Activated B cell treated with CpG ODN at 0.5 μM for 24 hours (primary cell): ENCODE measurements at regions of chr9 and their contacts with region 1.

Region 1: DNA sequence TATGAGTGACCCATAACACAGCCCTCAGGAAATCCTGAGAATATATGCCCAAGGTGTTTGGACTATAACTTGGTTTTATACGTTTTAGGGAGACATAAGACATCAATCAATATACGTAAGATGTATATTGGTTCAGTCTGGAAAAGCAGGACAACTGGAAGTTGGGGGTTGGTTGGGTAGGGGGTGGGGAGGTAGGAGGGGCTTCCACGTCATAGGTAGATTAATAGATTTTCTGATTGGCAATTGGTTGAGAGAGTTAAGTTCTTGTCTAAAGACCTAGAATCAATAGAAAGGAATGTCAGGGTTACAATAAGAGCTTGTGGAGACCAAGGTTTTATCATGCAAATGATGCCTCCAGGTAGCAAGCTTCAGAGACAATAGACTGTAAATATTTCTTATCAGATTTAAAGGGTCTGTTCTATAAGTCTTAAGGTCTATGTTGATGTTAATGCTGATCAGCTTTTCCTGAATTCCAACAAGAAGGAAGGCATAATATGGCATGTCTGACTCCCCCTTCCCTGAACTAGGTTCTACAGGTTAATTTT is 2267.7 kb upstream of the ACO1 start:
- DNase-seq: no peak
- ATAC-seq: no peak
- H3K4me3 Mint-ChIP-seq: no peak overlapping the region
- H3K27ac Mint-ChIP-seq: no peak overlapping the region
- H3K4me1 Mint-ChIP-seq: no peaks in the 10 kb centered on the region
- H3K27me3 Mint-ChIP-seq: no peaks in the 10 kb centered on the region
- CTCF ChIP-seq: no peak

Region 2: GRCh38 chr9:30015073-30015472 is 101.7 kb before region 1 on chr9:
- CTCF ChIA-PET with region 1: no interaction called
- POLR2A ChIA-PET with region 1: no interaction called
- intact Hi-C with region 1: no loop called
- DNase-seq: no peak
- ATAC-seq: no peak
- H3K4me3 Mint-ChIP-seq: no peak overlapping the region
- H3K27ac Mint-ChIP-seq: no peak overlapping the region
- H3K4me1 Mint-ChIP-seq: no peaks in the 10 kb centered on the region
- H3K27me3 Mint-ChIP-seq: no peaks in the 10 kb centered on the region
- CTCF ChIP-seq: no peak

Region 3: GRCh38 chr9:30172206-30172605 is 55.5 kb after region 1 on chr9:
- CTCF ChIA-PET with region 1: no interaction called
- POLR2A ChIA-PET with region 1: no interaction called
- intact Hi-C with region 1: loop called (anchors 10 kb)
- DNase-seq: no peak
- ATAC-seq: no peak
- H3K4me3 Mint-ChIP-seq: no peak overlapping the region
- H3K27ac Mint-ChIP-seq: no peak overlapping the region
- H3K4me1 Mint-ChIP-seq: no peaks in the 10 kb centered on the region
- H3K27me3 Mint-ChIP-seq: no peaks in the 10 kb centered on the region
- CTCF ChIP-seq: no peak

Region 4: GRCh38 chr9:30299126-30299780 is 182.5 kb after region 1 on chr9:
- CTCF ChIA-PET with region 1: no interaction called
- POLR2A ChIA-PET with region 1: no interaction called
- intact Hi-C with region 1: no loop called
- DNase-seq: no peak
- ATAC-seq: no peak
- H3K4me3 Mint-ChIP-seq: no peak overlapping the region
- H3K27ac Mint-ChIP-seq: no peak overlapping the region
- H3K4me1 Mint-ChIP-seq: no peaks in the 10 kb centered on the region
- H3K27me3 Mint-ChIP-seq: no peaks in the 10 kb centered on the region
- CTCF ChIP-seq: no peak